Ascending aorta (tissue), 2 donors: ENCODE measurements at regions of chr15 and their contacts with region 1.

Region 1: GRCh38 chr15:83815506-83815905 is 161.6 kb downstream of the ADAMTSL3 start:
- DNase-seq: no peak
- H3K4me3 ChIP-seq: no peak overlapping the region
- H3K27ac ChIP-seq: no peak overlapping the region
- H3K4me1 ChIP-seq: no peaks in the 10 kb centered on the region
- H3K27me3 ChIP-seq: no peaks in the 10 kb centered on the region
- CTCF ChIP-seq: no peak

Region 2: DNA sequence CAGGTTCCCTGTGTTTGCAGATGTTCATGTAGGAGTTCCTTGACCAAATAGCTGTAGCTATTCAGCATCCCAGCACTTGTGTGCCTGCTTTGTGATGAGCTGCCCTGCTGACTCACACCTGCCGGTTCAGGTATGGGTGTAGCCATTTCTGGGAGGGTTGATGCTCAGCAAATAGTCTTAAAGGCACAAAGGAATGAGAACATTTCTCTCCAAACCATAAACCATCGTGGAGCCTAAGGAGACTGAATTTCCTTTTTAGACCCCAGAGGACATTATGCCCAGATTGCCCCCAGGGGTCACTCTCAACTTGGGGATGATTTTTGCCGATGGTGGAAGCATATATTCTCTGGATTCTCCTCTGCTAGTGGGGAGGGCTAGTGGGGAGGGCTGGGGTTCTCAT is 81.0 kb before region 1 on chr15:
- intact Hi-C with region 1: loop called (anchors 10 kb)
- DNase-seq: no peak
- H3K4me3 ChIP-seq: no peak overlapping the region
- H3K27ac ChIP-seq: no peak overlapping the region
- H3K4me1 ChIP-seq: peaks cover 0 to 2% of the 10 kb centered on the region in 2 donors
- H3K27me3 ChIP-seq: no peaks in the 10 kb centered on the region
- CTCF ChIP-seq: no peak